IMR-90 (cell line): ENCODE measurements at regions of chr4 and their contacts with region 1.

Region 1: DNA sequence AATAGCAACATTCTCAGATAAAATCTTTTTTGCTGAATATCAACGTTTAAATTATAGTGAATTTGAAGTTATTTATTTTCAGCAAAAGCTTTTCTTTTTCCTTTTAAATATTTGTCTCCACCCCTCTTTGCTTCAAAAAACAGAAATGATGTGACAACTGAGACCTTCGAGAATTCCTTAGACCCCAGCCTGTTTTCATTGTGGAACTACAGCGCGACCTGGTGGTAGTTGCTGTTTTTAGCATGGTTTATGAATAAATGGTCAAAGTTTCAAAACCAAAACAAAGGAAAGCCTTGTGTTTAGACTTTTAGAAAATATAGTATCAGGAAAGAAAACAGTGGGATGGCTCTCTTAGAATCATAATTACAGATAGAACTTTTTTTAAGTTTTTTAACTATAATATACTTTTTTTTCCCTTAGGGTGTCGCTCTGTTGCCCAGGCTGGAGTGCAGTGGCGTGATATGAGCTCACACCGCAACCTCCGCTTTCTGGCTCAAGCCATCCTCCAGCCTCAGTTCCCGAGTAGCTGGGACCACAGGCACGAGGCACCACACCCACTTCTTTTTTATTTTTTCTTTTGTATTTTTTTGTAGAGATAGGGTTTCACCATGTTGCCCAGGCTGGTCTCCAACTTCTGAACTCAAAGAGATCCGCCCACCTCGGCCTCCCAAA is 26.8 kb upstream of the TMEM184C start:
- DNase-seq: peak; percentile 79
- ATAC-seq: peak; percentile 74
- H3K4me3 ChIP-seq: no peak overlapping the region
- H3K27ac ChIP-seq: peak overlapping the region; percentile 41; the same call in 1 of the 2 replicates
- H3K4me1 ChIP-seq: peaks cover 6% of the 10 kb centered on the region
- H3K27me3 ChIP-seq: no peaks in the 10 kb centered on the region
- CTCF ChIP-seq: peak; percentile 90
- POLR2A ChIP-seq: peak; percentile 41; the same call in 1 of the 2 replicates
- RAD21 ChIP-seq: peak; percentile 97

Region 2: DNA sequence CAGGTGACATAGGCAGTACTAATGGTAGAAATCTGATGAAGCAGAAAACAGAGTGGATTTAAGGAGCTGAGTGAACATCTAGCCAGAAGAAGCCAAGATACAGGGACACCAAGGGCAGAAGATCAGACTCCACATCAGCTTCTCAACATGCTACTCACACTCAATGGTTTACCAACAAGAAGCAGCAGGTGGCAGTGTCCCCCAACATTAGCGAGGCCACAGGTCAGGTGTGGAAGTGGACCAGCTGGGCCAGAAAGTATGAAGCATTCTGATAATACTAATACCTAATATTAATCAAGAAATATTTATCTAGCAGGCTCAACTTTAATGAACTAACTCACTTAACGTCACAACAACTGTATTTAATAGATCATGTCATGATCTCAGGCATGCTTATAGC is 571.3 kb before region 1 on chr4:
- CTCF ChIA-PET with region 1: interaction called, 5 read pairs
- POLR2A ChIA-PET with region 1: no interaction called
- dilution Hi-C with region 1: no loop called
- in situ Hi-C with region 1: loop called (anchors 10 kb)
- intact Hi-C with region 1: loop called (anchors 1 kb)
- DNase-seq: peak; percentile 56
- ATAC-seq: peak; percentile 89
- H3K4me3 ChIP-seq: no peak overlapping the region
- H3K27ac ChIP-seq: no peak overlapping the region
- H3K4me1 ChIP-seq: no peaks in the 10 kb centered on the region
- H3K27me3 ChIP-seq: peaks cover 8% of the 10 kb centered on the region
- CTCF ChIP-seq: peak; percentile 72
- POLR2A ChIP-seq: no peak
- RAD21 ChIP-seq: peak; percentile 88

Region 3: GRCh38 chr4:147111033-147111367 is 479.4 kb before region 1 on chr4:
- CTCF ChIA-PET with region 1: interaction called, 3 read pairs
- POLR2A ChIA-PET with region 1: no interaction called
- dilution Hi-C with region 1: no loop called
- in situ Hi-C with region 1: loop called (anchors 5 kb)
- intact Hi-C with region 1: loop called (anchors 1 kb)
- DNase-seq: peak; percentile 47
- ATAC-seq: peak; percentile 82
- H3K4me3 ChIP-seq: no peak overlapping the region
- H3K27ac ChIP-seq: no peak overlapping the region
- H3K4me1 ChIP-seq: no peaks in the 10 kb centered on the region
- H3K27me3 ChIP-seq: no peaks in the 10 kb centered on the region
- CTCF ChIP-seq: peak; percentile 58
- POLR2A ChIP-seq: no peak
- RAD21 ChIP-seq: peak; percentile 66

Region 4: DNA sequence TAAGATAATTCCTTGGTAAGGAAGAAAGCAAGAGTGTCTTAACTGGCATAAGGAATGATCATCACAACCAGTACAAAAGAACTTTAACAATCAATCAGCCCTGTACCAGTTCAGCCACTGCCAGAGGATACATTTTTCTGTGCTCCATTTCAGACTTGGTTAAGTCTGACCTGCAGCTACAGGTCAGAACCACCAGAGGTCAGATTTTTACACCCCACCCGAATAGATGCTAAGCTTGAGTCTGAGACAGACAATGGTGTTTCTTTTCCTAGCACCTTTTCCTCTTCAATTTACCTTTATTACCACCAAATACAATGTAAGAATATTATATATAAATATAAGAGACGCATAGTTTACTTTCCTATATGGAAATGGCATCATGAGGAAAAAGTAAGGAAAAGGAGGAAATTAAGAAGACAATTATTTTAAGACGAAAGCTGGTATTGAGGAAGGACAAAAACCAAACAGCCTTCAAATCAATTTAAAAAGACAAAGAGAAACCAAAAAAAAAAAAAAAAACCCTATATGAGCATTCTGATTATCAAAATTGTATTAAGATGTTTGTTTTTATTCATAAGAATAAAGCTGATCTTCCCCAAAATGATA is 429.4 kb before region 1 on chr4:
- CTCF ChIA-PET with region 1: interaction called, 8 read pairs
- POLR2A ChIA-PET with region 1: no interaction called
- dilution Hi-C with region 1: no loop called
- in situ Hi-C with region 1: loop called (anchors 5 kb)
- intact Hi-C with region 1: loop called (anchors 1 kb)
- DNase-seq: peak; percentile 71
- ATAC-seq: peak; percentile 84
- H3K4me3 ChIP-seq: no peak overlapping the region
- H3K27ac ChIP-seq: no peak overlapping the region
- H3K4me1 ChIP-seq: 0 out of 2 replicates have a peak, but pooled peaks cover 2% of the 10 kb centered on the region
- H3K27me3 ChIP-seq: no peaks in the 10 kb centered on the region
- CTCF ChIP-seq: peak; percentile 78
- POLR2A ChIP-seq: no peak
- RAD21 ChIP-seq: peak; percentile 84

Region 5: GRCh38 chr4:147480891-147481576 is 109.4 kb before region 1 on chr4 and contains the start of gene EDNRA:
- CTCF ChIA-PET with region 1: interaction called, 3 read pairs
- POLR2A ChIA-PET with region 1: no interaction called
- dilution Hi-C with region 1: no loop called
- in situ Hi-C with region 1: no loop called
- intact Hi-C with region 1: loop called (anchors 1 kb)
- DNase-seq: peak; percentile 68
- ATAC-seq: peak; percentile 85
- H3K4me3 ChIP-seq: peak within 1 kb of the TSS; percentile 69
- H3K27ac ChIP-seq: peak within 1 kb of the TSS; percentile 70
- H3K4me1 ChIP-seq: peaks cover 9% of the 10 kb centered on the region
- H3K27me3 ChIP-seq: no peaks in the 10 kb centered on the region
- CTCF ChIP-seq: no peak
- POLR2A ChIP-seq: peak; percentile 72
- RAD21 ChIP-seq: no peak
- total RNA-seq, gene EDNRA: 6.5 and 7.8 TPM in 2 replicates

Region 6: DNA sequence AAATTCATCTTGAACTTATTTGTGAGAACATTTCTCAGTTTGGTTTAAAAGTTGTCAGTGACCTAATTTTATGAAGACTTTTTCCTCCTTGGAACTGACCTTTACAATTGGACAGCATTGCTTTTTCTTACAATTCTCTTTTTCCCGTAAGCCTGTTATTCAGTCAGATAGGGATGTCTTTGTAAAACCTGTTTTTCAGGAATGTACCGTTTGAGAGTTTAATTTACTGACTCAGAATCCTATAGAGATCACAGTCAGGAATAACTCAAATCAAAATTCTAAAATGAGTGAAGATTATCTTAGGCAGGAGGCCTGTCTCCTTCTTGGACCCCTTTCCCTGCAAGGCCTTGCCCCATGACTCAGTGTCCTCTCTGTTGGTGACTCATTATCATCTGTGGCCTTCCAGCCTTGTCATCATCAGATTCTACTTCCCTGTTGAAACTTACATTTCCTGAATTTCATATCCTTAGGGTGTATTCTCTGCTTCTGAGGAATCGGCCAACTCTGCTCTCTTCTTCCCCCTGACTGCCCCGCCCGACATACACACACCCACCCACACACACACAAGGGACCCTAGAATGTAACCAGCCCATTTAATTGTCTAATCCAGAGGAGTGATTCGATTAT is 241.3 kb after region 1 on chr4:
- CTCF ChIA-PET with region 1: no interaction called
- POLR2A ChIA-PET with region 1: no interaction called
- dilution Hi-C with region 1: no loop called
- in situ Hi-C with region 1: no loop called
- intact Hi-C with region 1: no loop called
- DNase-seq: peak; percentile 93
- ATAC-seq: peak; percentile 48
- H3K4me3 ChIP-seq: no peak overlapping the region
- H3K27ac ChIP-seq: peak overlapping the region; percentile 48
- H3K4me1 ChIP-seq: peaks cover 27% of the 10 kb centered on the region
- H3K27me3 ChIP-seq: no peaks in the 10 kb centered on the region
- CTCF ChIP-seq: no peak
- POLR2A ChIP-seq: 0 out of 2 replicates have a peak, but pooled peaks have one; percentile 32
- RAD21 ChIP-seq: no peak

Region 7: DNA sequence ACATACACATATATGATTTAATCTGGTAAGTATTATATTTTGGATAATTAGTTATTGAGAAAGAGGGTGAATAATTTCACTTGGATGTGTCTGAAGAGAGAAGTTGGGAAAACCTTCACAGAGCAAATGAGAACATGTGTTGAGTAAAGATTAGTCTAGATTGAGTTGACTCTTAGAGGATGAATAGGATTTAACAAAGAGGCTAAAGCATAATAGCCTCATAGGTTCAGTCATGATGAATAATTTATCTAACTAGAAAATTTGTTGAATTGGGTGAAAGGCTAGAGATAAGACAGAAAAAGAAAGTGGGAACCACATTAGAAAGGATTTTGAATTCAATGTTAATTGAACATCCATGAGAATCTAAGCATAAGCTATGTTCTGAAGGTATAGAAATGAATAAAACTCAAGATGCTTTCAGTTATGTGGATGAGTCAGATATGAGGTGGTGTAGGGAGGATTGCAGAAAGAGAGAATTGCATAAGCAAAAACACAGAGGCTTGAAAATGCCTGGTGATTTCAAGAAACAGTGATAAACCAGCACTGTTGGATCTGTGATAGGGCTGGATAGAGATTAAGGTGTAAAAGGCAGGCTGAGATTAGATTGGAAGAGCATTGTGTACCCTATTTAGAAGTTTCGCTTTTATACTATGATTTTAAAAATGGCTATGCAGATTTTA is 1059.4 kb after region 1 on chr4:
- CTCF ChIA-PET with region 1: no interaction called
- POLR2A ChIA-PET with region 1: no interaction called
- dilution Hi-C with region 1: no loop called
- in situ Hi-C with region 1: no loop called
- intact Hi-C with region 1: no loop called
- DNase-seq: peak; percentile 49
- ATAC-seq: peak; percentile 71
- H3K4me3 ChIP-seq: no peak overlapping the region
- H3K27ac ChIP-seq: no peak overlapping the region
- H3K4me1 ChIP-seq: no peaks in the 10 kb centered on the region
- H3K27me3 ChIP-seq: no peaks in the 10 kb centered on the region
- CTCF ChIP-seq: no peak
- POLR2A ChIP-seq: no peak
- RAD21 ChIP-seq: no peak